Activated CD8-positive, alpha-beta T cell treated with anti-CD3 and anti-CD28 coated beads, Interleukin-2, amount 10 ng/mL, durations not matched to agents 7 days and 5 days (primary cell): ENCODE measurements at regions of chr19 and their contacts with region 1.

Region 1: DNA sequence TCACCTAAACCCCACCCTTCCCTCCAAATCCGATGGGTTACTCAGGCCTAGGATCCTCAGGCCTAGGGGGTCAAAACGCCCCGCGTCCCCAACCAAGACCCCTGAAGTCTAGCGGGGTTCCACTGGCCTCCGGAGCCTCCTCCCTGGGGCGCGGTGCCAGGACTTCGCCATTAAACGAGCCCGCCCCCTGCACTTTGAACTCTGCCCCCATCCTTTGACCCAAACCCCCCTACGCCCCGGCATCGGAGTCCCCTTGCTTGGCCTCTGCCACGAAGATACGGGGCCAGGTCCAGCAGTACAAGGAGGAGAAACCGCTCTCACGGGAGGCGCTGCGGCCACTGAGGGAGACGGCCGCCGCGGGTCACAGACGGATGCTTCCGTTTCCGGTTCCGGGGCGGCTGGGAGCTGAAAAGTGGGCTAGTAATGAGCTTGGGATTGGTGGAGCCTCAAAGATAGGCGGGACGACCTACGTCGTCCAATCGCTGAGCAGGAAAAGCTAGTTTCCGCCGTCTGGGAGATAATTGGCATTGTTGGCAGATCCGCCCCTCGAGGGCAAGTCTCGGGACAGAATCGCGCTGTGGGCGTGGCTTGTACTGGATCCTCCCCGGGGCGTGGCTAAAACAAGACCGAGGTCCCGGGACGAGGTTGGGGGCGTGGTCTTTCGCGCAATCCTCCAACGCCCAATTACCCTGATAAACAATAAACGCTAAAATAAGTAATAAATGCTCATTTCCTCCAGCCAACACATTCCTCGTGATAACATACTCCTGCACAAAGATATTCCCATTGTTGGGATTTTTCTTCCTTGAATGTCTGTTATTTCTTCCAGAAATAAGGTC is 5.7 kb upstream of the ZNF77 start:
- DNase-seq: peak; percentile 100
- ATAC-seq: peak; percentile 99
- H3K4me3 Mint-ChIP-seq: peak overlapping the region; percentile 97
- H3K27ac Mint-ChIP-seq: peak overlapping the region; percentile 96
- H3K4me1 Mint-ChIP-seq: peaks cover 35% of the 10 kb centered on the region
- H3K27me3 Mint-ChIP-seq: no peaks in the 10 kb centered on the region

Region 2: DNA sequence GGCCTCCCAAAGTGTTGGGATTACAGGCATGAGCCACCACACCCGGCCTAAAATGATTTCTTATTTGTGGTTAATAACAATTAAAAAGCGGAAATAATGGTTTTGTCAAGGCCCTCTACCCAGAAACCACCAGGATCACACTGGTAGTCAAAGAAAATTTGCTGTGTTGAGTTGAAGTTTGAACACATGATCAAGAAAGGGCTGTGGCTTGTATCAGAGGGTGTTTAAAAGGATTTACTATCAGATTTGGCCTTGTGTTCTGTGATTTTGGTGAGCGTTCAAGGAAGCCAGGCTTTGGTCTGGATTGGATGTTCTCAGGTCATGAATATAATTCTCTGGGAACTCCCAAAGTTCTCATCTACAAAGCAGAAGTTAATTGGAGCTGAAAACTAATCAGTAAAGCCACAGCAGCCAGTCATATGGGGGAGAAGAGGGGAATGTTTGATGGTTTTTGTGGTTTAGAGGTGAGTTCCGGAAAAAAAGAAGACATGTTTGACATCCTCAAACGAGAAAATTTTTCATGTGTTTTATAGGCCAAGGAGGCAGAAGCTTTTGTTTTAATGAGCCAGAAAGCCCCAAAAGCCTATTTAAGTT is 94.0 kb before region 1 on chr19:
- CTCF ChIA-PET with region 1: no interaction called
- POLR2A ChIA-PET with region 1: no interaction called
- DNase-seq: no peak
- ATAC-seq: no peak
- H3K4me3 Mint-ChIP-seq: no peak overlapping the region
- H3K27ac Mint-ChIP-seq: peak overlapping the region; percentile 54
- H3K4me1 Mint-ChIP-seq: peaks cover 12% of the 10 kb centered on the region
- H3K27me3 Mint-ChIP-seq: no peaks in the 10 kb centered on the region

Region 3: GRCh38 chr19:2887391-2887914 is 63.1 kb before region 1 on chr19:
- CTCF ChIA-PET with region 1: interaction called, 23 read pairs
- POLR2A ChIA-PET with region 1: no interaction called
- DNase-seq: no peak
- ATAC-seq: peak; percentile 42
- H3K4me3 Mint-ChIP-seq: no peak overlapping the region
- H3K27ac Mint-ChIP-seq: no peak overlapping the region
- H3K4me1 Mint-ChIP-seq: peaks cover 7% of the 10 kb centered on the region
- H3K27me3 Mint-ChIP-seq: no peaks in the 10 kb centered on the region

Region 4: GRCh38 chr19:2923510-2923909 is 27.0 kb before region 1 on chr19:
- CTCF ChIA-PET with region 1: interaction called, 10 read pairs
- POLR2A ChIA-PET with region 1: interaction called, 3 read pairs
- DNase-seq: no peak
- ATAC-seq: no peak
- H3K4me3 Mint-ChIP-seq: no peak overlapping the region
- H3K27ac Mint-ChIP-seq: no peak overlapping the region
- H3K4me1 Mint-ChIP-seq: no peaks in the 10 kb centered on the region
- H3K27me3 Mint-ChIP-seq: no peaks in the 10 kb centered on the region

Region 5: GRCh38 chr19:2977001-2977685 is 26.6 kb after region 1 on chr19 and contains the start of gene TLE6:
- CTCF ChIA-PET with region 1: interaction called, 13 read pairs
- POLR2A ChIA-PET with region 1: interaction called, 7 read pairs
- DNase-seq: peak; percentile 97
- ATAC-seq: peak; percentile 100
- H3K4me3 Mint-ChIP-seq: peak within 1 kb of the TSS; percentile 94
- H3K27ac Mint-ChIP-seq: peak within 1 kb of the TSS; percentile 93
- H3K4me1 Mint-ChIP-seq: peaks cover 21% of the 10 kb centered on the region
- H3K27me3 Mint-ChIP-seq: peaks cover 9% of the 10 kb centered on the region
- total RNA-seq, gene TLE6: 2.0 to 2.7 TPM

Region 6: GRCh38 chr19:3108775-3109174 is 158.3 kb after region 1 on chr19:
- CTCF ChIA-PET with region 1: interaction called, 86 read pairs
- POLR2A ChIA-PET with region 1: no interaction called
- DNase-seq: peak; percentile 80
- ATAC-seq: peak; percentile 81
- H3K4me3 Mint-ChIP-seq: no peak overlapping the region
- H3K27ac Mint-ChIP-seq: no peak overlapping the region
- H3K4me1 Mint-ChIP-seq: peaks cover 15% of the 10 kb centered on the region
- H3K27me3 Mint-ChIP-seq: no peaks in the 10 kb centered on the region

Region 7: GRCh38 chr19:3163230-3163886 is 212.9 kb after region 1 on chr19:
- CTCF ChIA-PET with region 1: interaction called, 10 read pairs
- POLR2A ChIA-PET with region 1: no interaction called
- DNase-seq: peak; percentile 78
- ATAC-seq: peak; percentile 91
- H3K4me3 Mint-ChIP-seq: no peak overlapping the region
- H3K27ac Mint-ChIP-seq: peak overlapping the region; percentile 67
- H3K4me1 Mint-ChIP-seq: peaks cover 52% of the 10 kb centered on the region
- H3K27me3 Mint-ChIP-seq: no peaks in the 10 kb centered on the region